Activated T-helper 1 cell treated with anti-CD3 and anti-CD28 coated beads, Interleukin-12 subunit alpha, Interleukin-12 subunit beta, Interleukin-2, Interleukin-4 antibody, amounts not matched to agents 30 ng/mL and 10 ng/mL and 1 ng/mL, durations not matched to agents 14 hours and 24 hours and 36 hours (primary cell): ENCODE measurements at regions of chrX and their contacts with region 1.

Region 1: GRCh38 chrX:45935408-45935807 is 609.8 kb downstream of the ZNF674 start:
- DNase-seq: no peak
- H3K4me3 Mint-ChIP-seq: no peak overlapping the region
- H3K27ac Mint-ChIP-seq: peak overlapping the region; percentile 82
- H3K4me1 Mint-ChIP-seq: peaks cover 6% of the 10 kb centered on the region
- H3K27me3 Mint-ChIP-seq: no peaks in the 10 kb centered on the region

Region 2: GRCh38 chrX:45621376-45622041 is 313.9 kb before region 1 on chrX:
- intact Hi-C with region 1: loop called (anchors 10 kb)
- DNase-seq: no peak
- H3K4me3 Mint-ChIP-seq: no peak overlapping the region
- H3K27ac Mint-ChIP-seq: peak overlapping the region; percentile 91
- H3K4me1 Mint-ChIP-seq: peaks cover 19% of the 10 kb centered on the region
- H3K27me3 Mint-ChIP-seq: no peaks in the 10 kb centered on the region

Region 3: DNA sequence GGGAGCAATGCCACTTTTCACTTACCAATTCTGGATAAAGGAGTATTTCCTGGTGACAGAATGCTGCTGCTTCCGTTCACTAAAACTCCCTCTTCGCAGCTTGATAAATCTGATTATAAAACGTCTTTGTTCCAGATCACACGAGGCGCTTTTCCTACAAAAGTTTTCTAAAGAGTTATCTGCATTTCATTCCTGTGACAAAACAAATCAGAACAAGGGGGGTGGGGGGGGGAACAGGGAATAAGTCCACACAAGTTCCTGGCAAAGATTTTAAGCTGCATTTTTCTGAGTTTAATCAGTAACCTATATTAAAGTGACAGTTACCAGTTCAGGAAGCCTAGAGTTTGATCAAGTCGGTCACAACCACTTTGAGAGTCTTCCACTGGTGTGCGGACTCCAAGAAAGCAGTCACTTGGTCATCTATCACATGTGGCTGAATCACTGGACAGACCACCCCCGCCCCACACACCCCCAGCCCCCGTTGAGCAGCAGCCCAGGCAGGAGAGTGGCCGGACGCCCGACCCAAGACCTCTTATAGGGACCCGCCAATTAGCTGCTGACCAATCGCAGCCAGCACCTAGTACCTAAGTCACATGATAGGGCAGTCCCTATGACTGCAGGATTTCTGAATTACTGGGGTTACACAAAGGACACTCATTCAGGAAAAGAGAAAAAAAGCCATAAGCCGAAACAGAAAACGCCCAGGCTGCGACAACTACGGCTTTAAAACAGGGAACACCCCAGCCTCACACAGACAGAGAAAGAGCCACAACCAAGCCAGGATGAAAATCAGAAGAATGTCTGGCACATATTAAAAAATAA is 165.4 kb before region 1 on chrX:
- intact Hi-C with region 1: loop called (anchors 10 kb)
- DNase-seq: peak; percentile 6
- H3K4me3 Mint-ChIP-seq: peak overlapping the region; percentile 98
- H3K27ac Mint-ChIP-seq: peak overlapping the region; percentile 98
- H3K4me1 Mint-ChIP-seq: peaks cover 59% of the 10 kb centered on the region
- H3K27me3 Mint-ChIP-seq: no peaks in the 10 kb centered on the region

Region 4: GRCh38 chrX:46279925-46280313 is 344.5 kb after region 1 on chrX:
- intact Hi-C with region 1: loop called (anchors 10 kb)
- DNase-seq: no peak
- H3K4me3 Mint-ChIP-seq: no peak overlapping the region
- H3K27ac Mint-ChIP-seq: peak overlapping the region; percentile 23
- H3K4me1 Mint-ChIP-seq: peaks cover 20% of the 10 kb centered on the region
- H3K27me3 Mint-ChIP-seq: no peaks in the 10 kb centered on the region